ENCODE measurements at regions of chr11 and their contacts with region 1.

Region 1: DNA sequence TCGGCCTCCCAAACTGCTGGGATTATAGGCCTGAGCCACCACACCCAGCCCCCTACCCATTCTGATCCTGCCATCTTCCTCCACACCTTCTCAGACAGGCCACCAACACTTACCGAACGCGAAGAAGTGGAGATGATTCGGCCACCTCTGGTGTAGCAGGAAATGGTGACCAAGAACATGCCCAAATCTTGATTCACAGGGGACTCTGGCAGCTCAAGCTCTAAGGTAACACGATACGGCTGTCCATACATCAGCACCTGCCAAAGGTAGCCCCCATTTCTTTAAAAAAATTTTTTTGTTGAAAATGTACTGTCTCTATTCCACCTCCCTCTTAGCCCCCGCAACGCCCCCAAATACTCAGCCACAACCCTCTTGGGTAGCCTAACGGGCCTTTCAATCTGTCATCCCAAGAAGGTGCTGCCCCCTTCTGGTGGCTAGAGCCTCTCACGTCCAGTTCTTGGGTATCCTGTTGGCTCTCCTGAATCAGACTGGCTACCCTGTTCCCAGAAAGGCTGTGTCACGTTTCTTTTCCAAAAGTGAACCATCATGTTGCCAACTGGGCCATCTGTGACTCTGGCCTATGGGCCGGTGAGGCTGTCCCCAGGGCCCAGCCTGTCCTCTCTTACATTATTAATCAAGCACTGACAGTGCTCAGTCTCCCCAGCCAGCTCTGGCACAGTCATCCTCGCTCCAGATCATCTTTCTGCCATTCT is 5.3 kb upstream of the LRRN4CL start:
- DNase-seq: peak; percentile 86
- H3K4me3 Mint-ChIP-seq: no peak overlapping the region
- H3K27ac Mint-ChIP-seq: peak overlapping the region; percentile 33
- H3K4me1 Mint-ChIP-seq: peaks cover 6% of the 10 kb centered on the region
- H3K27me3 Mint-ChIP-seq: no peaks in the 10 kb centered on the region

Region 2: GRCh38 chr11:62551696-62552250 is 142.8 kb before region 1 on chr11:
- CTCF ChIA-PET with region 1: no interaction called
- DNase-seq: peak; percentile 92
- H3K4me3 Mint-ChIP-seq: peak overlapping the region; percentile 37
- H3K27ac Mint-ChIP-seq: peak overlapping the region; percentile 97
- H3K4me1 Mint-ChIP-seq: peaks cover 82% of the 10 kb centered on the region
- H3K27me3 Mint-ChIP-seq: peaks cover 44% of the 10 kb centered on the region

Region 3: GRCh38 chr11:62591448-62592145 is 103.0 kb before region 1 on chr11 and contains the start of gene TUT1:
- CTCF ChIA-PET with region 1: interaction called, 20 read pairs
- DNase-seq: peak; percentile 98
- H3K4me3 Mint-ChIP-seq: peak within 1 kb of the TSS; percentile 100
- H3K27ac Mint-ChIP-seq: peak within 1 kb of the TSS; percentile 98
- H3K4me1 Mint-ChIP-seq: peaks cover 56% of the 10 kb centered on the region
- H3K27me3 Mint-ChIP-seq: no peaks in the 10 kb centered on the region

Region 4: GRCh38 chr11:62656796-62657429 is 37.7 kb before region 1 on chr11:
- CTCF ChIA-PET with region 1: interaction called, 10 read pairs
- DNase-seq: no peak
- H3K4me3 Mint-ChIP-seq: no peak overlapping the region
- H3K27ac Mint-ChIP-seq: no peak overlapping the region
- H3K4me1 Mint-ChIP-seq: peaks cover 22% of the 10 kb centered on the region
- H3K27me3 Mint-ChIP-seq: peaks cover 3% of the 10 kb centered on the region

Region 5: GRCh38 chr11:62678770-62679696 is 15.6 kb before region 1 on chr11 and contains the start of gene UBXN1:
- CTCF ChIA-PET with region 1: interaction called, 40 read pairs
- DNase-seq: peak; percentile 92
- H3K4me3 Mint-ChIP-seq: peak within 1 kb of the TSS; percentile 88
- H3K27ac Mint-ChIP-seq: peak within 1 kb of the TSS; percentile 90
- H3K4me1 Mint-ChIP-seq: peaks cover 47% of the 10 kb centered on the region
- H3K27me3 Mint-ChIP-seq: no peaks in the 10 kb centered on the region

Region 6: GRCh38 chr11:62705880-62706849 is 11.6 kb after region 1 on chr11:
- CTCF ChIA-PET with region 1: interaction called, 20 read pairs
- DNase-seq: peak; percentile 96
- H3K4me3 Mint-ChIP-seq: peak overlapping the region; percentile 87
- H3K27ac Mint-ChIP-seq: peak overlapping the region; percentile 66
- H3K4me1 Mint-ChIP-seq: peaks cover 57% of the 10 kb centered on the region
- H3K27me3 Mint-ChIP-seq: no peaks in the 10 kb centered on the region

Region 7: GRCh38 chr11:62816557-62816956 is 121.9 kb after region 1 on chr11:
- CTCF ChIA-PET with region 1: no interaction called
- DNase-seq: no peak
- H3K4me3 Mint-ChIP-seq: no peak overlapping the region
- H3K27ac Mint-ChIP-seq: no peak overlapping the region
- H3K4me1 Mint-ChIP-seq: peaks cover 2% of the 10 kb centered on the region
- H3K27me3 Mint-ChIP-seq: no peaks in the 10 kb centered on the region

Region 8: GRCh38 chr11:62842185-62842741 is 147.7 kb after region 1 on chr11:
- CTCF ChIA-PET with region 1: no interaction called
- DNase-seq: peak; percentile 61
- H3K4me3 Mint-ChIP-seq: no peak overlapping the region
- H3K27ac Mint-ChIP-seq: no peak overlapping the region
- H3K4me1 Mint-ChIP-seq: peaks cover 22% of the 10 kb centered on the region
- H3K27me3 Mint-ChIP-seq: peaks cover 5% of the 10 kb centered on the region

Measured in activated naive CD4-positive, alpha-beta T cell treated with anti-CD3 and anti-CD28 coated beads, Interleukin-2, amount 10 ng/mL, durations not matched to agents 7 days and 5 days (primary cell).